IMR-90 (cell line): ENCODE measurements at regions of chr5 and their contacts with region 1.

Region 1: GRCh38 chr5:156968819-156969218 is 5.8 kb upstream of the TIMD4 start:
- DNase-seq: no peak
- ATAC-seq: no peak
- H3K4me3 ChIP-seq: no peak overlapping the region
- H3K27ac ChIP-seq: no peak overlapping the region
- H3K4me1 ChIP-seq: no peaks in the 10 kb centered on the region
- H3K27me3 ChIP-seq: no peaks in the 10 kb centered on the region
- CTCF ChIP-seq: no peak
- POLR2A ChIP-seq: no peak
- RAD21 ChIP-seq: no peak

Region 2: GRCh38 chr5:156570615-156571014 is 398.2 kb before region 1 on chr5:
- CTCF ChIA-PET with region 1: no interaction called
- POLR2A ChIA-PET with region 1: no interaction called
- dilution Hi-C with region 1: no loop called
- in situ Hi-C with region 1: no loop called
- intact Hi-C with region 1: no loop called
- DNase-seq: no peak
- ATAC-seq: no peak
- H3K4me3 ChIP-seq: no peak overlapping the region
- H3K27ac ChIP-seq: no peak overlapping the region
- H3K4me1 ChIP-seq: no peaks in the 10 kb centered on the region
- H3K27me3 ChIP-seq: no peaks in the 10 kb centered on the region
- CTCF ChIP-seq: no peak
- POLR2A ChIP-seq: no peak
- RAD21 ChIP-seq: no peak

Region 3: GRCh38 chr5:156755421-156756087 is 213.3 kb before region 1 on chr5:
- CTCF ChIA-PET with region 1: no interaction called
- POLR2A ChIA-PET with region 1: no interaction called
- dilution Hi-C with region 1: no loop called
- in situ Hi-C with region 1: no loop called
- intact Hi-C with region 1: no loop called
- DNase-seq: peak; percentile 24
- ATAC-seq: peak; percentile 53
- H3K4me3 ChIP-seq: no peak overlapping the region
- H3K27ac ChIP-seq: no peak overlapping the region
- H3K4me1 ChIP-seq: no peaks in the 10 kb centered on the region
- H3K27me3 ChIP-seq: no peaks in the 10 kb centered on the region
- CTCF ChIP-seq: no peak
- POLR2A ChIP-seq: no peak
- RAD21 ChIP-seq: no peak

Region 4: GRCh38 chr5:156906807-156907206 is 62.0 kb before region 1 on chr5:
- CTCF ChIA-PET with region 1: interaction called, 10 read pairs
- POLR2A ChIA-PET with region 1: no interaction called
- dilution Hi-C with region 1: no loop called
- in situ Hi-C with region 1: no loop called
- intact Hi-C with region 1: no loop called
- DNase-seq: no peak
- ATAC-seq: no peak
- H3K4me3 ChIP-seq: no peak overlapping the region
- H3K27ac ChIP-seq: no peak overlapping the region
- H3K4me1 ChIP-seq: no peaks in the 10 kb centered on the region
- H3K27me3 ChIP-seq: no peaks in the 10 kb centered on the region
- CTCF ChIP-seq: no peak
- POLR2A ChIP-seq: no peak
- RAD21 ChIP-seq: no peak